Dorsolateral prefrontal cortex (tissue), 120 donors: ENCODE measurements at regions of chr16 and their contacts with region 1.

Region 1: DNA sequence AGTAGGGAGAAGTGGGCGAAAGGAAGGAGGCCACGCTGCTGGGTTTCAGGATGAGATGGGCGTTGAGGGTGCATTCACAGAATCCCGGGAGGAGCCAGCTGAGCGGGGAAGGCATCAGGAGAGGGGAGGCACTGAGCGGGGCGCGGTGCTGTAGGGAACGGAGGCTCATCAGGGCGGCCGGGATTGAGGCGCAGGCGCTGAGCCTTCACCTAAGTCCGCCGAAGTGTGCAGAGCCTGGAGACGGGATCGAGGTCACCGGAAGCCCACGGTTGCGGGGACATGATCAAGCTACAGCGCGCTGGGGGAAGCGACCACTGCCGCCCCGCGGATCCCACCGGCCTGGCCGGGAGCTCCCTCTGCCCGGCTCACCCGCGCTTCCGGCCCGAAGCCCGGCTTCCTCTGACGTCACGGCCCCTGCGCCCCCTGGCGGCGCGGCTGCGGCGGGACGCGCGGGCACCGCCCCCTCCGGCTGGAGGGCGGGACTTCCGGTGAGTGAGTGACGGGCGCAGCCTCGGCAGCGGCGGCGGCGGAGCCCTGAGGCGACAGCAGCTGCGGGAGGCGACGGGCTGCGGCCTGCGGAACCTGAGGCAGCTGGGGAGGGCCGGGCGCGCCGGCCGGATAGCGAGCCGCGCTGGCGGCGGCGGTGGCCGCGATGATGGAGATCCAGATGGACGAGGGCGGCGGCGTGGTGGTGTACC is at the start of gene MAPK8IP3:
- DNase-seq: peak; percentile 77 to 96 (median 87)
- H3K4me3 ChIP-seq: peak within 1 kb of the TSS; percentile 71 to 99 (median 94)
- H3K27ac ChIP-seq: peak within 1 kb of the TSS; percentile 29 to 99 (median 92)
- H3K27me3 ChIP-seq: no peaks in the 10 kb centered on the region
- CTCF ChIP-seq: peak; percentile 64 to 99 (median 94)
- total RNA-seq, gene MAPK8IP3: 246 to 429 (median 311) TPM

Region 2: DNA sequence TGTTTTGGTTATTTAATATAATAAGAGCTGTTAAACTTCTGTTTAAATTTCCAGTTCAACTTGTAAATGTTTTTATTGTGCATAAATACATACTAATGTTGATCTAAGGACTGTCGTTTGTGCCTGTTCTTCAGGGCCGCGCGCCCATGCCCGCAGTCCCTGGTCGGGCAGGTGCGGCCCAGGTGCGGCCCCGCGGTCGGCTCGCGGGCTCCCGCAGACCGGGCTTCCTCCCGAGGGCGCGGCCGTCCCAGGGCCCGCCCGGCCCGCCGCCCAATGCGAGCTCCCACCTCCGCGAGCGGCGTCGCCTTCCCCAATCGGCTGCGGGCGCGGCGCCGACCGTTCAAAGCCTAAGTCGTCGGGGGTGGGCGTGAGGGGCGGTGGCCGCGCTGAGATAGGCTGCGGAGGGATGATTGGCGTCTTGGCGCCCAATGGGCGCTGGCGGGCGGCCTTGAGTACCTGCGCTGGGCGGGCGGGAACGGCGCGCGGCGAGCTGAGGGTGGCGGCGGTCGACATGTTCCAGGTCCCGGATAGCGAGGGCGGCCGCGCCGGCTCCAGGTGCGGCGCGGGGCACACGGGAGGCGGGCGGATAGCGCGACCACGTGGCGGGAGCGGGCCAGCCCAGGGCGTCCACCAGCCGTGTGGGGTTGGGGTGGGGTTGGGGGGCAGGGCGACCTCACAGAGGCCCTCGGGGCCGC is 27.9 kb before region 1 on chr16 and contains the start of gene JPT2:
- intact Hi-C with region 1: loop called in 1 of 2 experiments (anchors 1 kb)
- DNase-seq: peak; percentile 90 to 98 (median 95)
- H3K4me3 ChIP-seq: peak within 1 kb of the TSS; percentile 40 to 88 (median 72)
- H3K27ac ChIP-seq: peak within 1 kb of the TSS in 36 of 59 donors; percentile 7 to 82 (median 42)
- H3K27me3 ChIP-seq: no peaks in the 10 kb centered on the region
- CTCF ChIP-seq: peak in 19 of 56 donors; percentile 6 to 37 (median 17)
- total RNA-seq, gene JPT2: 7.1 to 57.9 (median 18.9) TPM

Region 3: GRCh38 chr16:1721372-1721771 is 15.5 kb after region 1 on chr16:
- intact Hi-C with region 1: loop called in 1 of 2 experiments (anchors 1 kb)
- DNase-seq: no peak
- H3K4me3 ChIP-seq: peak overlapping the region in 4 of 59 donors; percentile 20 to 39 (median 25)
- H3K27ac ChIP-seq: peak overlapping the region in 58 of 59 donors; percentile 59 to 97 (median 92)
- H3K27me3 ChIP-seq: no peaks in the 10 kb centered on the region
- CTCF ChIP-seq: no peak

Region 4: GRCh38 chr16:1757714-1758404 is 52.0 kb after region 1 on chr16:
- intact Hi-C with region 1: no loop called
- DNase-seq: no peak
- H3K4me3 ChIP-seq: no peak overlapping the region
- H3K27ac ChIP-seq: peak overlapping the region in 3 of 59 donors; percentile 10 to 78 (median 17)
- H3K27me3 ChIP-seq: no peaks in the 10 kb centered on the region
- CTCF ChIP-seq: no peak

Region 5: DNA sequence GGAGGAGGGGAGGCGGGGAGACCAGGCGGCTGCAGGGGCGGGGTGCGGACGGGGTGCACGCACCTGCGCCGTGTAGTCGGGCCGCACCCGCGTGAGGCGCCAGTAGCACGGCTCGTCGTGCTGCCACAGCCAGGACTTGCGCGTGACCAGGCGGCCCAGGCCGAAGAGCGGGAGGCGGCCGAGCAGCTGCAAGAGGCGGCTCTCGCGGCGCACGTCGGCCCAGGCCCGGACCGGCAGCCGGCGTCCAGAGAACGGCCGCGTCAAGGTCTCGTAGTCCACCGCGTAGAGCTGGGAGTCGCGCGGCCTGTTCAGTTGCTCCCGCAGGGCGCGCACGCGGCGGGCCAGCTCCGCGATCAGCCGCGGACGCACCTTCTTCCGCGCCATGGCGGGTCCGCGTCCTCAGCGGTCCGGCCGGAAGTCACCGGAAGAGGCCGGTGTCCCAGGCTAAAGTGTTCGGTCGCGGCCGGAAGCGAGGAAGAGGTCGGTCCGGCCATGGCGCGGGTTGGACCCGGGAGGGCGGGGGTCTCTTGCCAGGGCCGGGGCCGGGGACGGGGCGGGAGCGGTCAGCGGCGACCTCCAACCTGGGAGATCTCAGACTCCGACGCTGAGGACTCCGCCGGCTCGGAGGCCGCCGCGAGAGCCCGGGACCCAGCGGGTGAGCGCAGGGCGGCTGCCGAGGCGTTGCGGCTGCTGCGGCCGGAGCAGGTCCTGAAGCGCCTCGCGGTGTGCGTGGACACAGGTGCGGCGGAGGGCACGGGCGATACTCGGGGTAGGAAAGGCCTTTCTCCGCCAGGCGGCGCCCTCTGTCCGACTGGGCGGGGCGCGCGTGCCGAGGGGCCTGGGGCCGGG is 67.1 kb after region 1 on chr16 and contains the starts of genes EME2 and MRPS34:
- intact Hi-C with region 1: loop called (anchors 2 kb)
- DNase-seq: peak; percentile 47 to 89 (median 78)
- H3K4me3 ChIP-seq: peak within 1 kb of the TSS; percentile 77 to 100 (median 95)
- H3K27ac ChIP-seq: peak within 1 kb of the TSS; percentile 81 to 99 (median 95)
- H3K27me3 ChIP-seq: no peaks in the 10 kb centered on the region
- CTCF ChIP-seq: peak; percentile 37 to 83 (median 68)
- total RNA-seq, gene EME2: 12.6 to 44.4 (median 21.7) TPM
- total RNA-seq, gene MRPS34: 37.4 to 77.9 (median 58.6) TPM

Region 6: DNA sequence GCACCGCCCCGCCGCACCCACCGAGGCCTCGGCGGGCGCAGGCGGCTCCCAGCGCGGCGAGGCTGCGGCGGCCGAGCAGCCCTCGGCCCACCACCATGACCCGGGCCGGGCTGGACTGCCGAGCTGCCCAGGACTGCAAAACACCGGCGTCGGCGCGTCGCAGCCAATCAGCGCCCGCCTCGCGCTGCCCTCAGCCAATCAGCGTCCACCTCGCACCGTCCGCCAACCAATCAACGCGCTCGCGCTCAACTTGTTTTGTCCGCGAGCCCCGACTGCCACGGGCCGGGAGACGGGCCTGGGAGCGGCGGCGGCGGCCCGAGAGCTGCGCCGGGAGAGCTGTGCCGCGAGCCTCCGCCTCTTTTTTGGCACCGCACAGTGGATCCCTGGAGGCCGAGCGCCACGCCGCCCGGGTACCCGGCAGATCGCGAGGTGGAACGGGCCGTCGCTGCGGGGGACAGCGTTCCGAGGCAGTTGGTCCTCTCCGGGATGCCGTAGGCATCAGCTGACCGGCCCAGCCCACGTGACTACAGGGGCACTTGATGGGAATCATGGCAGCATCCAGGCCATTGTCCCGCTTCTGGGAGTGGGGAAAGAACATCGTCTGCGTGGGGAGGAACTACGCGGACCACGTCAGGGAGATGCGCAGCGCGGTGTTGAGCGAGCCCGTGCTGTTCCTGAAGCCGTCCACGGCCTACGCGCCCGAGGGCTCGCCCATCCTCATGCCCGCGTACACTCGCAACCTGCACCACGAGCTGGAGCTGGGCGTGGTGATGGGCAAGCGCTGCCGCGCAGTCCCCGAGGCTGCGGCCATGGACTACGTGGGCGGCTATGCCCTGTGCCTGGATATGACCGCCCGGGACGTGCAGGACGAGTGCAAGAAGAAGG is 121.1 kb after region 1 on chr16 and contains the starts of genes FAHD1 and HAGH:
- intact Hi-C with region 1: loop called in 1 of 2 experiments (anchors 5 kb)
- DNase-seq: peak; percentile 91 to 96 (median 92)
- H3K4me3 ChIP-seq: peak within 1 kb of the TSS; percentile 51 to 100 (median 97)
- H3K27ac ChIP-seq: peak within 1 kb of the TSS in 58 of 59 donors; percentile 67 to 97 (median 90)
- H3K27me3 ChIP-seq: no peaks in the 10 kb centered on the region
- CTCF ChIP-seq: peak in 26 of 56 donors; percentile 7 to 49 (median 29)
- total RNA-seq, gene FAHD1: 13.0 to 36.9 (median 23.5) TPM
- total RNA-seq, gene HAGH: 85.9 to 195 (median 142) TPM